Psoas muscle (tissue), 8 donors: ENCODE measurements at regions of chr11 and their contacts with region 1.

Region 1: GRCh38 chr11:31764766-31765165 is 46.4 kb downstream of the PAX6 start:
- DNase-seq: no peak
- ATAC-seq: no peak
- H3K4me3 ChIP-seq: no peak overlapping the region
- H3K27ac ChIP-seq: no peak overlapping the region
- H3K4me1 ChIP-seq: peaks cover 10% of the 10 kb centered on the region
- H3K27me3 ChIP-seq: no peaks in the 10 kb centered on the region
- CTCF ChIP-seq: no peak

Region 2: GRCh38 chr11:31690041-31690440 is 74.7 kb before region 1 on chr11:
- intact Hi-C with region 1: loop called in 1 of 2 experiments (anchors 5 kb)
- DNase-seq: no peak
- ATAC-seq: no peak
- H3K4me3 ChIP-seq: no peak overlapping the region
- H3K27ac ChIP-seq: no peak overlapping the region
- H3K4me1 ChIP-seq: no peaks in the 10 kb centered on the region
- H3K27me3 ChIP-seq: no peaks in the 10 kb centered on the region
- CTCF ChIP-seq: no peak

Region 3: DNA sequence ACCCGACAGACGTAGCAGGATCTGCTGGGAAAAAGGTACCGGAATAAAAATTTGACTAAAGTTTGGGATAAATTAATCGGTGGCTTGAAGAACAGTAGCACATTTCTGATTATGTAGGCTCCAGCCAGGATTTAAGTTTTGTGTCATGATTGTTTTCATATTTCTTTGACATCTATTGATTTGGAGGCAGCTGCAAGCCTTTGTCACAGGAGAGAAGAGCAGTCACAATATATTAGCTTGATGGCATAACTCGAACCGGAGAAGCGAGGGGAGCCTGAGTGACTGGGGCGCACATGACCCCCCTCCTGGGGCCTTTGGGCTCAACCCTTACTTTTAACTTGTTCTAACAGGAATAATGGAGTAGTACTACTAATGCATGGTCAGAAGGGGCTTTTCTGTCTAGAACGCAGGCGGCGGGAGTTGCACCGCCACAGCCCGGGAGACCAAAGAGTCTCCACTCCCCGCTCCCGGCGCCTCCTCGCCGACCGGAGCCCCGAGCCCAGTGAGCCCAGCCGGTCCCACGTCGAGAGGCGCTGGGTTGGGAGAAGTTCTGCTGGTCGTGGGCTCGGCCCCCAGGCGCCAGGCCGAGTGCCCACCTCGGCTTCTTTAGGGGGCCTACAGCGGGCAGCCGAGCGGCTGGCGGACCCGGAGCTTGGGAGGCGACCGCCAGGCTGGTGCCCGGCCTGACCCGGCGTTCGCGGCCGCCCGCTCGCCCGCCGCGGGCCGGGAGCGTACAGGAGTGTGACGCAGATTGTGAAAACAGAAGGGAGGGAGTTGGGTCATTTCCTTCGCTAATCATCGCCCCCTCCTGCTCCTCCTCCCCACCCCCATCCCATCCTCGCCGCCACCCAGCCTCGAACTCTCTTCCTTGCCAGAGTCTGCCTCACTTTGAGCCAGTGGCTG is 62.0 kb after region 1 on chr11:
- intact Hi-C with region 1: no loop called
- DNase-seq: no peak
- ATAC-seq: peak in 1 of 4 donors; percentile 31
- H3K4me3 ChIP-seq: peak overlapping the region; percentile 33
- H3K27ac ChIP-seq: no peak overlapping the region
- H3K4me1 ChIP-seq: no peaks in the 10 kb centered on the region
- H3K27me3 ChIP-seq: peaks cover 15 to 99% (median 51%) of the 10 kb centered on the region in 3 donors
- CTCF ChIP-seq: no peak